ENCODE measurements at regions of chr17 and their contacts with region 1.

Region 1: DNA sequence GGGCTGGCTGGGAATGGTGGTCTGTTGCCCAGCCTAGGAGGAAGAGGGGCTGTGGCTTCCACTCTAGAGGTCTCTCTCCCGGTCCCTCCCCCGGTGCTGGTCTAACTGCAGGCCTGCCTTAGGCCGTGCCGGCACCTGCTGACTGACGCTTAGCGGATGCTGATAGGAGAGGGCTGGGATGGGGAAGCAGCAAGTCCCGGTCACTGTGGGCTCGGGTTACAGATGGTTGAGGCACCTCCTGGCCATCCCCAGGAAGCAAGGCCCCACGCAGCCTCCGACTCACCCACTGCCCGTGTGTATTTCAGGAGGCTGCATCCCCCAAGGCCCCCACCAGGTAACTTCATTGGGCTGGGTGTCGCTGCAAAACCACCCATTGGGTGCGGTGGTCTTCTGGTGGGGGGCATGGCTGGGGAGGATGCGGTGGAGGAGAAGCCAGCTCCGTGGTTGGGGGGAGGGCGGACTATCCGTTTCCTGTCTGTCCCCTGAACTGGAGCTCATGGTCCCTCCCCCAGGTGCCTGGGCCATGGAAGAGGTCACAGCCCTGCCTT is 278.9 kb downstream of the SEC14L1 start:
- DNase-seq: no peak
- H3K4me3 ChIP-seq: no peak overlapping the region
- H3K27ac ChIP-seq: peak overlapping the region; percentile 96 to 100 (median 98)
- H3K4me1 ChIP-seq: peaks cover 0 to 95% (median 91%) of the 10 kb centered on the region in 4 donors
- H3K27me3 ChIP-seq: no peaks in the 10 kb centered on the region
- CTCF ChIP-seq: no peak
- EP300 ChIP-seq: no peak
- POLR2A ChIP-seq: no peak

Region 2: DNA sequence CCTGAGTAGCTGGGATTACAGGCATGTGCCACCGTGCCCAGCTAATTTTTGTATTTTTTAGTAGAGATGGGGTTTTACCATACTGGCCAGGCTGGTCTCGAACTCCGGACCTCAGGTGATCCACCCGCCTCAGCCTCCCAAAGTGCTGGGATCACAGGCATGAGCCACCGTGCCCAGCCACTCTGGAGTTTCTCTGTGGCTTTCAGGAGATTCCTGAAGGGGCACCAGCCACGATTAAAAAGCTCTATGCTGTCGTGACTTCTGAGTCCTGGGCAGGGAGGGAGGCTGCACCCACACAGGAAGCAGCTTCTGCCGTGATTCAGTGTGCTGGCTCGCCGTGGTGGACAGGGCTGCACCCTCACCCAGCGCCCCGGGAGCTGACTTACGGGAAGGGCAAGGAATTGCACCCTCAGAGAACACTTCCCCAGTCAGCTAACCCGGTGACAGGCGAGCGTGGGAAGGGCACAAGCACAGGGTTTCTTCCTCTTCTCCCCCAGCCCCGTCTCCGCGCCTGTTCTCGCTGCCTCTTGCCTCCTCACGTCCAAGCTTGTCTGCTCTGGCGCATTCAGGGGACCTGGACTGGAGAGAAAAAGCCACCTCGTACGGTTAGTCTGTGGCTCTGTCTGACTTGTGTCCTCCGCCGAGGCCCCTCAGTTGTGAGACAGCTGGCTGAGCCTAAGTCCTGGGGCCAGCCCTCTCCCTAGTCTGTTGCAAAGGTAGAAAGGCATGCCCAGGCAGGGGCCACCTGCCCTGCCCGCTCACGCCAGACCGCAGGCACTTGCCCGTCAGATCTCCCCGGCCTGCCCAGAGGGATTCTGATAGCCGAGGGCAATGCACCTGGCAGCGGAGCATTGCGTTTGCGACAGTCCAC is 133.9 kb before region 1 on chr17:
- intact Hi-C with region 1: no loop called
- DNase-seq: peak; percentile 78
- H3K4me3 ChIP-seq: no peak overlapping the region
- H3K27ac ChIP-seq: peak overlapping the region; percentile 57 to 87 (median 84)
- H3K4me1 ChIP-seq: peaks cover 0 to 55% (median 41%) of the 10 kb centered on the region in 4 donors
- H3K27me3 ChIP-seq: no peaks in the 10 kb centered on the region
- CTCF ChIP-seq: no peak
- EP300 ChIP-seq: no peak
- POLR2A ChIP-seq: no peak

Region 3: GRCh38 chr17:77409282-77410161 is 10.1 kb before region 1 on chr17:
- intact Hi-C with region 1: loop called (anchors 1 kb)
- DNase-seq: peak; percentile 97
- H3K4me3 ChIP-seq: peak overlapping the region; percentile 9 to 33 (median 27)
- H3K27ac ChIP-seq: peak overlapping the region; percentile 96 to 100 (median 98)
- H3K4me1 ChIP-seq: peaks cover 0 to 86% (median 80%) of the 10 kb centered on the region in 4 donors
- H3K27me3 ChIP-seq: no peaks in the 10 kb centered on the region
- CTCF ChIP-seq: no peak
- EP300 ChIP-seq: peak in 1 of 4 donors; percentile 89
- POLR2A ChIP-seq: peak; percentile 26 to 35

Region 4: GRCh38 chr17:77441130-77441920 is 21.7 kb after region 1 on chr17:
- intact Hi-C with region 1: no loop called
- DNase-seq: no peak
- H3K4me3 ChIP-seq: no peak overlapping the region
- H3K27ac ChIP-seq: peak overlapping the region; percentile 51 to 100 (median 76)
- H3K4me1 ChIP-seq: peaks cover 0 to 91% (median 79%) of the 10 kb centered on the region in 4 donors
- H3K27me3 ChIP-seq: no peaks in the 10 kb centered on the region
- CTCF ChIP-seq: no peak
- EP300 ChIP-seq: no peak
- POLR2A ChIP-seq: no peak

Measured in sigmoid colon (tissue), 7 donors.